ENCODE measurements at regions of chr2 and their contacts with region 1.

Region 1: GRCh38 chr2:226977775-226978190 is 141.9 kb downstream of the RHBDD1 start:
- DNase-seq: no peak
- H3K4me3 ChIP-seq: no peak overlapping the region
- H3K27ac ChIP-seq: no peak overlapping the region
- H3K4me1 ChIP-seq: no peaks in the 10 kb centered on the region
- H3K27me3 ChIP-seq: no peaks in the 10 kb centered on the region
- CTCF ChIP-seq: no peak
- POLR2A ChIP-seq: no peak

Region 2: DNA sequence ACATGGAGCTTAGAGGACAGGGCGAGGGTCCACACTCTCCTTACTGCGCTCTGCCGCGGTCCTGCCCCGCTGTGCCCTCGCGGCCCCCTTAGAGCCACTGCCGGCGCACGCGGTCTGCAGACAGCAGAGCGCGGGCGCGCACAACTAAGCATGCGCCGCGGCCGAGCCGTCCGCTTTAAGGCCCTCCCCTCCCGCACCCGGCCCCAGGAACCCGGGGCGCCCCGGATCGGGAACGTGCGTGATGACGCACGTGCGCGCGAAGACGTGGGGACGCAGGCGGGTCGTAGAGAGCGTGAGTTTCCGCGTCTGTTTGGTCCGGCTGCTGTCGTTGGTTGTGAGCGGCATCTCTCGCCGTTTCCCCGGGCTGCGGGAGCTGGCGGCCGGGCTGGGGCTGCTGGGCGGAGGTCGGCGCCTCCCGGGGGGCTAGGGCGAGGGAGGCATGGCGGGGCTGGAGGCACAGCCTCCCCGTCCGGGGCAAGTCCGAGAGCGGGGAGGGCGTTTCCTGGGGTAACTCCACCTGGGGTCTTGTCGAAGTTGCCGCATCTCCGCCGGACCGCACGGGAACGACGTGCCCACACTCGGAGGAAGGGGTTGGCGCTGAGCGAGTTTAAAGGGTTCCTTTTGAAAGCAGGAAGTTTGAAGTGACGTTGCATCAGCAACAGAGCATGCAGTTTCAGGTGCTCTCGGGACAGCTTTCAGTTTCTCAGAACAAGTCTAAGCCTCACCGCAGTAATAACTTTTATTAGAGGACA is 141.8 kb before region 1 on chr2 and contains the start of gene RHBDD1:
- intact Hi-C with region 1: loop called (anchors 10 kb)
- DNase-seq: peak; percentile 89
- H3K4me3 ChIP-seq: peak within 1 kb of the TSS; percentile 60 to 82
- H3K27ac ChIP-seq: peak within 1 kb of the TSS; percentile 96 to 99
- H3K4me1 ChIP-seq: peaks cover 7% of the 10 kb centered on the region
- H3K27me3 ChIP-seq: no peaks in the 10 kb centered on the region
- CTCF ChIP-seq: peak in 1 of 4 experiments; percentile 14
- POLR2A ChIP-seq: peak; percentile 70
- total RNA-seq, gene RHBDD1: 16.5 to 33.5 TPM

Region 3: GRCh38 chr2:226849349-226849748 is 128.4 kb before region 1 on chr2:
- intact Hi-C with region 1: no loop called
- DNase-seq: no peak
- H3K4me3 ChIP-seq: no peak overlapping the region
- H3K27ac ChIP-seq: no peak overlapping the region
- H3K4me1 ChIP-seq: no peaks in the 10 kb centered on the region
- H3K27me3 ChIP-seq: no peaks in the 10 kb centered on the region
- CTCF ChIP-seq: no peak
- POLR2A ChIP-seq: no peak

Measured in prostate gland (tissue), 2 donors.